HCT116 (cell line): ENCODE measurements at regions of chr11 and their contacts with region 1.

Region 1: GRCh38 chr11:94183886-94184264 is 55.2 kb downstream of the PANX1 start:
- DNase-seq: peak; percentile 49
- ATAC-seq: peak; percentile 94
- H3K4me3 ChIP-seq: no peak overlapping the region
- H3K27ac ChIP-seq: no peak overlapping the region
- H3K4me1 ChIP-seq: peaks cover 0 to 5% of the 10 kb centered on the region in 2 experiments; a peak in 1 of 4 replicates
- H3K27me3 ChIP-seq: no peaks in the 10 kb centered on the region
- CTCF ChIP-seq: peak; percentile 65 to 94 (median 90)
- POLR2A ChIP-seq: no peak
- RAD21 ChIP-seq: peak; percentile 82

Region 2: GRCh38 chr11:93921695-93922468 is 262.0 kb before region 1 on chr11:
- CTCF ChIA-PET with region 1: interaction called, 6 read pairs
- POLR2A ChIA-PET with region 1: no interaction called
- RAD21 ChIA-PET with region 1: no interaction called
- intact Hi-C with region 1: loop called (anchors 10 kb)
- DNase-seq: peak; percentile 60
- ATAC-seq: peak; percentile 98
- H3K4me3 ChIP-seq: no peak overlapping the region
- H3K27ac ChIP-seq: no peak overlapping the region
- H3K4me1 ChIP-seq: no peaks in the 10 kb centered on the region
- H3K27me3 ChIP-seq: no peaks in the 10 kb centered on the region
- CTCF ChIP-seq: peak; percentile 61 to 94 (median 79)
- POLR2A ChIP-seq: no peak
- RAD21 ChIP-seq: peak; percentile 89

Region 3: GRCh38 chr11:94171693-94172440 is 12.0 kb before region 1 on chr11:
- CTCF ChIA-PET with region 1: interaction called, 14 read pairs
- POLR2A ChIA-PET with region 1: no interaction called
- RAD21 ChIA-PET with region 1: no interaction called
- intact Hi-C with region 1: no loop called
- DNase-seq: peak; percentile 16
- ATAC-seq: peak; percentile 95
- H3K4me3 ChIP-seq: no peak overlapping the region
- H3K27ac ChIP-seq: no peak overlapping the region
- H3K4me1 ChIP-seq: no peaks in the 10 kb centered on the region
- H3K27me3 ChIP-seq: no peaks in the 10 kb centered on the region
- CTCF ChIP-seq: peak; percentile 42 to 96 (median 91); a peak in 5 of 6 replicates
- POLR2A ChIP-seq: no peak
- RAD21 ChIP-seq: peak; percentile 70

Region 4: GRCh38 chr11:94201004-94201465 is 17.2 kb after region 1 on chr11:
- CTCF ChIA-PET with region 1: no interaction called
- POLR2A ChIA-PET with region 1: no interaction called
- RAD21 ChIA-PET with region 1: no interaction called
- intact Hi-C with region 1: no loop called
- DNase-seq: no peak
- ATAC-seq: no peak
- H3K4me3 ChIP-seq: no peak overlapping the region
- H3K27ac ChIP-seq: no peak overlapping the region
- H3K4me1 ChIP-seq: no peaks in the 10 kb centered on the region
- H3K27me3 ChIP-seq: no peaks in the 10 kb centered on the region; the same call in 1 of the 2 replicates
- CTCF ChIP-seq: no peak
- POLR2A ChIP-seq: no peak
- RAD21 ChIP-seq: no peak

Region 5: DNA sequence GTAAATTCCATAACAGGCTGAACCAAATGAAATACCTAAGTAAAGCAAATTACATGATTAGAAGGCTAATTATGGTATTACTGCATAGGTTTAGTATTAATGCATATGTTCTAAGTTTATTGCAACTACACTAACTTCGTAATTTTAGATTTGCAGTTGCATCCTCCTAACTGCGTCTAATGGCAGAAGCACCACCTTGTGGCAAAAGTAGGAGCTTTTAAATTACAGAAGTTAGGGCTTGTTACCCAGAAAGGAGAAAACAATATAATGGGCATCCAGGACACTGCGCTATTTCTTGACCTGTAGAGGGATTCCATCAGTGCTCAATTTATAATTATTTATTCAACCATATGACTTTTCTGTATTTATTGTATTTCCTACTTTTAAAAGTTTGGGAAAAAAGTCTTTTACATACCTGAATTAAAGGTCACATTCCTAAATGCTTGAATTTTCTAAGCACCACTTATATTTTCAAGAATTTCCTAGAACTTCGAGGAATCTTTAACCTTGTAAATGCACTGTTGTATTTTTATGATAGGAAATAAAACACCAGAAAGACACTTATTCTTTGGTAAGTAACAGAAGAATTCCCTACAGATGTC is 233.6 kb after region 1 on chr11:
- CTCF ChIA-PET with region 1: interaction called, 6 read pairs
- POLR2A ChIA-PET with region 1: no interaction called
- RAD21 ChIA-PET with region 1: no interaction called
- intact Hi-C with region 1: loop called (anchors 1 kb)
- DNase-seq: peak; percentile 2
- ATAC-seq: peak; percentile 67
- H3K4me3 ChIP-seq: no peak overlapping the region
- H3K27ac ChIP-seq: no peak overlapping the region
- H3K4me1 ChIP-seq: no peaks in the 10 kb centered on the region
- H3K27me3 ChIP-seq: no peaks in the 10 kb centered on the region
- CTCF ChIP-seq: peak; percentile 39 to 55 (median 52); a peak in 5 of 6 replicates
- POLR2A ChIP-seq: no peak
- RAD21 ChIP-seq: peak; percentile 56